Activated naive CD4-positive, alpha-beta T cell treated with anti-CD3 and anti-CD28 coated beads, Interleukin-2, amount 10 ng/mL, durations not matched to agents 7 days and 5 days (primary cell): ENCODE measurements at regions of chr2 and their contacts with region 1.

Region 1: GRCh38 chr2:187581125-187581896 is 27.1 kb upstream of the TFPI start:
- DNase-seq: no peak
- H3K4me3 Mint-ChIP-seq: no peak overlapping the region
- H3K27ac Mint-ChIP-seq: no peak overlapping the region
- H3K4me1 Mint-ChIP-seq: peaks cover 6% of the 10 kb centered on the region
- H3K27me3 Mint-ChIP-seq: no peaks in the 10 kb centered on the region

Region 2: GRCh38 chr2:187499941-187500532 is 81.3 kb before region 1 on chr2:
- CTCF ChIA-PET with region 1: interaction called, 117 read pairs
- DNase-seq: peak; percentile 57
- H3K4me3 Mint-ChIP-seq: no peak overlapping the region
- H3K27ac Mint-ChIP-seq: no peak overlapping the region
- H3K4me1 Mint-ChIP-seq: no peaks in the 10 kb centered on the region
- H3K27me3 Mint-ChIP-seq: no peaks in the 10 kb centered on the region

Region 3: GRCh38 chr2:187532348-187533120 is 48.8 kb before region 1 on chr2:
- CTCF ChIA-PET with region 1: no interaction called
- DNase-seq: no peak
- H3K4me3 Mint-ChIP-seq: no peak overlapping the region
- H3K27ac Mint-ChIP-seq: no peak overlapping the region
- H3K4me1 Mint-ChIP-seq: no peaks in the 10 kb centered on the region
- H3K27me3 Mint-ChIP-seq: no peaks in the 10 kb centered on the region